ENCODE measurements at regions of chr12 and their contacts with region 1.

Region 1: GRCh38 chr12:51326762-51327439 is 2.9 kb upstream of the BIN2 start:
- DNase-seq: no peak
- H3K4me3 ChIP-seq: no peak overlapping the region
- H3K27ac ChIP-seq: peak overlapping the region in 1 of 2 donors; percentile 50
- H3K4me1 ChIP-seq: no peaks in the 10 kb centered on the region
- H3K27me3 ChIP-seq: no peaks in the 10 kb centered on the region
- CTCF ChIP-seq: no peak
- POLR2A ChIP-seq: no peak

Region 2: GRCh38 chr12:50839042-50839441 is 487.9 kb before region 1 on chr12:
- intact Hi-C with region 1: loop called (anchors 10 kb)
- DNase-seq: no peak
- H3K4me3 ChIP-seq: no peak overlapping the region
- H3K27ac ChIP-seq: no peak overlapping the region
- H3K4me1 ChIP-seq: no peaks in the 10 kb centered on the region
- H3K27me3 ChIP-seq: no peaks in the 10 kb centered on the region
- CTCF ChIP-seq: no peak
- POLR2A ChIP-seq: no peak

Region 3: DNA sequence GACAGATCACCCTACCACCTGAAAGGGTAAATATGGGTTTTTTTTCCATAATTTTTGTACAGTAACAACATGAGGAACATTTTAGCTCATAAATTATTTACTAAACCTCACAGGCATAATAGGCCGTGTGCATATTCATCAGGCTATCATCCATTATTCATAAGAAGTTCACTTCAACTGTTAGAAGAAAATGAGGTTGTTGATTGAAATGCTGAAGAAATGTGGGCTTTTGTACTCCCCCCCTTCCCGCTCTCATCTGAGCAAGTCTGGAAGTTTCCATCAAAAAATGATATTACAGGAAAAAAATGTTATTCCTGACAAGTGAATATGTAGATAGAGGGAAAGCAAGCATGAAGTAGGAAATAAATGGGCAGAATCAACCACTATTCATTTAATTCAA is 101.1 kb before region 1 on chr12:
- intact Hi-C with region 1: no loop called
- DNase-seq: no peak
- H3K4me3 ChIP-seq: no peak overlapping the region
- H3K27ac ChIP-seq: no peak overlapping the region
- H3K4me1 ChIP-seq: no peaks in the 10 kb centered on the region
- H3K27me3 ChIP-seq: no peaks in the 10 kb centered on the region
- CTCF ChIP-seq: no peak
- POLR2A ChIP-seq: no peak

Region 4: GRCh38 chr12:51471111-51471864 is 144.4 kb after region 1 on chr12:
- intact Hi-C with region 1: no loop called
- DNase-seq: no peak
- H3K4me3 ChIP-seq: no peak overlapping the region
- H3K27ac ChIP-seq: no peak overlapping the region
- H3K4me1 ChIP-seq: no peaks in the 10 kb centered on the region
- H3K27me3 ChIP-seq: no peaks in the 10 kb centered on the region
- CTCF ChIP-seq: no peak
- POLR2A ChIP-seq: no peak

Measured in testis (tissue), 5 donors.